GM12878 (cell line): ENCODE measurements at regions of chr14 and their contacts with region 1.

Region 1: DNA sequence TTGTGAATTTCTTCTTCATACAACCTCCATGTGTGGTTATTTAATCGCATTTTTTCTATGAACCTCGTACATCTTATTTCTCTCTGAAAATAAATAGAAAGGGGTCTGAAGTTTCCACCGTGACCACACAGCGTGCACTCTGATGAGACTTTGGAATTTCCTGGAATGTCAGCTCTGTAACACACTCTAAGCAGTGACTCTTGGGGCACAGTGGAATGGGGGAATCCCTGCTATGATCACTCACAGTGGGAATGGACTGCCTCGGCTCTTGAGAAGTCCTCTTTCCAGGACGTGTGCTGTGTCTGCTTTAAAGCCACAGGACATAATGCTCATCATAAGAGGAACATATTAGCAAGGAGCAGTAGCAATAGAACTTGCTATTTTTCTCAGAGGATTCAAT is 416.2 kb downstream of the EGLN3 start:
- DNase-seq: no peak
- ATAC-seq: no peak
- H3K4me3 ChIP-seq: no peak overlapping the region
- H3K27ac ChIP-seq: no peak overlapping the region
- H3K4me1 ChIP-seq: no peaks in the 10 kb centered on the region
- H3K27me3 ChIP-seq: no peaks in the 10 kb centered on the region
- CTCF ChIP-seq: no peak
- EP300 ChIP-seq: no peak
- POLR2A ChIP-seq: no peak
- RAD21 ChIP-seq: no peak

Region 2: GRCh38 chr14:33414041-33414440 is 120.6 kb before region 1 on chr14:
- CTCF ChIA-PET with region 1: no interaction called
- POLR2A ChIA-PET with region 1: no interaction called
- RAD21 ChIA-PET with region 1: no interaction called
- SMC1A ChIA-PET with region 1: no interaction called
- in situ Hi-C with region 1: no loop called
- intact Hi-C with region 1: no loop called
- DNase-seq: peak; percentile 3
- ATAC-seq: no peak
- H3K4me3 ChIP-seq: no peak overlapping the region
- H3K27ac ChIP-seq: no peak overlapping the region
- H3K4me1 ChIP-seq: no peaks in the 10 kb centered on the region
- H3K27me3 ChIP-seq: no peaks in the 10 kb centered on the region
- CTCF ChIP-seq: no peak
- EP300 ChIP-seq: no peak
- POLR2A ChIP-seq: no peak
- RAD21 ChIP-seq: no peak

Region 3: GRCh38 chr14:33516898-33517436 is 17.7 kb before region 1 on chr14:
- CTCF ChIA-PET with region 1: interaction called, 22 read pairs
- POLR2A ChIA-PET with region 1: interaction called, 101 read pairs
- RAD21 ChIA-PET with region 1: interaction called, 209 read pairs
- SMC1A ChIA-PET with region 1: interaction called, 298 read pairs
- in situ Hi-C with region 1: no loop called
- intact Hi-C with region 1: no loop called
- DNase-seq: no peak
- ATAC-seq: peak; percentile 16; the same call in 1 of the 3 replicates
- H3K4me3 ChIP-seq: no peak overlapping the region
- H3K27ac ChIP-seq: no peak overlapping the region
- H3K4me1 ChIP-seq: no peaks in the 10 kb centered on the region
- H3K27me3 ChIP-seq: peaks cover 0 to 2% of the 10 kb centered on the region in 2 experiments; a peak in 2 of 4 replicates
- CTCF ChIP-seq: no peak
- EP300 ChIP-seq: no peak
- POLR2A ChIP-seq: no peak
- RAD21 ChIP-seq: no peak

Region 4: GRCh38 chr14:33556382-33557121 is 21.9 kb after region 1 on chr14:
- CTCF ChIA-PET with region 1: interaction called, 14 read pairs
- POLR2A ChIA-PET with region 1: interaction called, 105 read pairs
- RAD21 ChIA-PET with region 1: interaction called, 279 read pairs
- SMC1A ChIA-PET with region 1: interaction called, 271 read pairs
- in situ Hi-C with region 1: no loop called
- intact Hi-C with region 1: no loop called
- DNase-seq: no peak
- ATAC-seq: no peak
- H3K4me3 ChIP-seq: no peak overlapping the region
- H3K27ac ChIP-seq: no peak overlapping the region
- H3K4me1 ChIP-seq: no peaks in the 10 kb centered on the region
- H3K27me3 ChIP-seq: peaks cover 0 to 3% of the 10 kb centered on the region in 2 experiments; a peak in 1 of 4 replicates
- CTCF ChIP-seq: no peak
- EP300 ChIP-seq: no peak
- POLR2A ChIP-seq: no peak
- RAD21 ChIP-seq: no peak

Region 5: GRCh38 chr14:33668066-33668465 is 133.4 kb after region 1 on chr14:
- CTCF ChIA-PET with region 1: interaction called, 3 read pairs
- POLR2A ChIA-PET with region 1: no interaction called
- RAD21 ChIA-PET with region 1: interaction called, 3 read pairs
- SMC1A ChIA-PET with region 1: interaction called, 13 read pairs
- in situ Hi-C with region 1: no loop called
- intact Hi-C with region 1: no loop called
- DNase-seq: no peak
- ATAC-seq: no peak
- H3K4me3 ChIP-seq: no peak overlapping the region
- H3K27ac ChIP-seq: no peak overlapping the region
- H3K4me1 ChIP-seq: no peaks in the 10 kb centered on the region
- H3K27me3 ChIP-seq: no peaks in the 10 kb centered on the region
- CTCF ChIP-seq: no peak
- EP300 ChIP-seq: no peak
- POLR2A ChIP-seq: no peak
- RAD21 ChIP-seq: no peak